Heart right ventricle (tissue), 16 donors: ENCODE measurements at regions of chr13 and their contacts with region 1.

Region 1: DNA sequence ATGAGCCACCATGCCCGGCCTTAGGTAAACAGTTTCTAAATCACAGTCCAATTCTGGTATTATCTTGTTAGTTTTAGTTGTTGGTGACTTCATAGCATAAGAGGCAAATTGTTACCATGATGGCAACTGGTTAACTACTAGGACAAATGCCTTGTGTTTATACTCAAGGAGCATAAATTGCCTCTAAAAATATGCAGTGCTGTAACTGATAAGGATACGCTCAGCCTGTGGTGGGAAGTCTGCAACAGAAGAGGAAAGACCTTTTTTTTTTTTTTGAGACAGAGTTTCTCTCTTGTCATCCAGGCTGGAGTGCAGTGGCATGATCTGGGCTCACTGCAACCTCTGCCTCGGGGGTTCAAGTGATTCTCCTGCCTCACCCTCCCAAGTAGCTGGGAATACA is 311.9 kb upstream of the ARGLU1 start:
- DNase-seq: no peak
- ATAC-seq: no peak
- H3K4me3 ChIP-seq: no peak overlapping the region
- H3K27ac ChIP-seq: no peak overlapping the region
- H3K4me1 ChIP-seq: peaks cover 0 to 34% (median 5%) of the 10 kb centered on the region in 9 donors
- H3K27me3 ChIP-seq: no peaks in the 10 kb centered on the region
- CTCF ChIP-seq: no peak

Region 2: DNA sequence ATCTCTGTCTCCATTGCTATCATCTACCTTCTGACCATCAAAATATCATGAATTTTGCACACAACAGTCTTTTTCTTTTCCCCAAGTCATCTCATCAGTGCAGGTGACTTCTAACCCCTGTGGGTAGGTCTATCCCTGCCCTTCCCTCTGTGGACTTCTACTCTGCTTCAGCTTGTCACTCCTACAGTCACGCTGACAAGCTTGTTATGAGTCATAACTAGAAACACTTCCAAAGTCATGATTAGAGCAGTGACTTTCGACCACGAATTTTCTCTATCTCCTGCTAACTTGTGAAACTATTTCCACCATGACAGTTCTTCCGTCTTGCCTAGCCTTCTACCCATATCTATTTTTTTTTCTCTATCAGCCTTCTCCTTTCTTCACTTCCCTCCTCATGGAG is 31.8 kb after region 1 on chr13:
- intact Hi-C with region 1: loop called in 1 of 10 experiments (anchors 5 kb)
- DNase-seq: no peak
- ATAC-seq: no peak
- H3K4me3 ChIP-seq: no peak overlapping the region
- H3K27ac ChIP-seq: no peak overlapping the region
- H3K4me1 ChIP-seq: peaks cover 0 to 15% (median 7%) of the 10 kb centered on the region in 9 donors
- H3K27me3 ChIP-seq: peaks cover 0 to 3% (median 0%) of the 10 kb centered on the region in 7 donors
- CTCF ChIP-seq: no peak

Region 3: GRCh38 chr13:106922378-106922777 is 42.6 kb after region 1 on chr13:
- intact Hi-C with region 1: no loop called
- DNase-seq: no peak
- ATAC-seq: no peak
- H3K4me3 ChIP-seq: no peak overlapping the region
- H3K27ac ChIP-seq: peak overlapping the region in 2 of 10 donors; percentile 30 to 98
- H3K4me1 ChIP-seq: peaks cover 0 to 34% (median 14%) of the 10 kb centered on the region in 9 donors
- H3K27me3 ChIP-seq: peaks cover 0 to 5% (median 0%) of the 10 kb centered on the region in 7 donors
- CTCF ChIP-seq: no peak